ENCODE measurements at regions of chr19 and their contacts with region 1.

Region 1: DNA sequence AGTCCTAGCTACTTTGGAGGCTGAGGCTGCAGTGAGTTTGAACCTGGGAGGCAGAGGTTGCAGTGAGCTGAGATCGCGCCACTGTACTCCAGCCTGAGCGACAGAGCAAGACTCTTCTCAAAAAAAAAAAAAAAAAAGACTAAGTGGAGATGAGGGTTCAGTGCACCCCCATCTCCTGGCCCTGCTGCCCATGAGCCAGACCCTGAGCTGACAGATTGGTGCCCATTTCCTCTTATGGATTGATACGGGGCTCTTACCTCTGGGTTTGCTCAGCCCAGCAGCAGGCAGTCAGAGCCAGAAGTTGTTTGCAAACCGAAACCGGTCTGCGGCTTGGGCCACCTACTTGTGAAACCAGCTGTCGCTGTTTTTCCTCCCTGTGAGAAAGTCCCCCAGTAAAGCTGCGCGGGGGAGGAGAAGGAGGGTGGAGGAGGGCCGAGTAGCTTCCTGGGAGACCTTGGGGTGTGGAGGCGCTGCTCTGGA is 36.9 kb downstream of the ARRDC2 start:
- DNase-seq: peak; percentile 71 to 87 (median 85)
- ATAC-seq: peak; percentile 37 to 63 (median 55)
- H3K4me3 ChIP-seq: peak overlapping the region; percentile 3 to 60 (median 50)
- H3K27ac ChIP-seq: peak overlapping the region; percentile 62 to 93 (median 78)
- H3K4me1 ChIP-seq: peaks cover 0 to 36% (median 23%) of the 10 kb centered on the region in 12 donors
- H3K27me3 ChIP-seq: no peaks in the 10 kb centered on the region
- CTCF ChIP-seq: no peak
- POLR2A ChIP-seq: peak in 1 of 2 donors; percentile 17

Region 2: GRCh38 chr19:18021121-18021755 is 23.6 kb before region 1 on chr19:
- intact Hi-C with region 1: loop called in 2 of 10 experiments (anchors 2 kb)
- DNase-seq: peak; percentile 89 to 95 (median 92)
- ATAC-seq: peak; percentile 12 to 66 (median 50)
- H3K4me3 ChIP-seq: peak overlapping the region in 3 of 12 donors; percentile 18 to 38 (median 33)
- H3K27ac ChIP-seq: peak overlapping the region; percentile 86 to 98 (median 94)
- H3K4me1 ChIP-seq: peaks cover 32 to 84% (median 68%) of the 10 kb centered on the region in 12 donors
- H3K27me3 ChIP-seq: no peaks in the 10 kb centered on the region
- CTCF ChIP-seq: no peak
- POLR2A ChIP-seq: peak in 1 of 2 donors; percentile 16

Measured in heart left ventricle (tissue), 16 donors.